SK-N-SH (cell line): ENCODE measurements at regions of chr10 and their contacts with region 1.

Region 1: GRCh38 chr10:97869091-97870042 is 19.7 kb downstream of the GOLGA7B start:
- DNase-seq: peak; percentile 93
- H3K4me3 ChIP-seq: no peak overlapping the region
- H3K27ac ChIP-seq: peak overlapping the region in 1 of 2 experiments; percentile 80; a peak in 2 of 4 replicates
- H3K4me1 ChIP-seq: peaks cover 0 to 15% of the 10 kb centered on the region in 2 experiments; a peak in 2 of 4 replicates
- H3K27me3 ChIP-seq: peaks cover 18% of the 10 kb centered on the region; the same call in 1 of the 2 replicates
- CTCF ChIP-seq: peak; percentile 72
- EP300 ChIP-seq: no peak
- RAD21 ChIP-seq: peak; percentile 98

Region 2: DNA sequence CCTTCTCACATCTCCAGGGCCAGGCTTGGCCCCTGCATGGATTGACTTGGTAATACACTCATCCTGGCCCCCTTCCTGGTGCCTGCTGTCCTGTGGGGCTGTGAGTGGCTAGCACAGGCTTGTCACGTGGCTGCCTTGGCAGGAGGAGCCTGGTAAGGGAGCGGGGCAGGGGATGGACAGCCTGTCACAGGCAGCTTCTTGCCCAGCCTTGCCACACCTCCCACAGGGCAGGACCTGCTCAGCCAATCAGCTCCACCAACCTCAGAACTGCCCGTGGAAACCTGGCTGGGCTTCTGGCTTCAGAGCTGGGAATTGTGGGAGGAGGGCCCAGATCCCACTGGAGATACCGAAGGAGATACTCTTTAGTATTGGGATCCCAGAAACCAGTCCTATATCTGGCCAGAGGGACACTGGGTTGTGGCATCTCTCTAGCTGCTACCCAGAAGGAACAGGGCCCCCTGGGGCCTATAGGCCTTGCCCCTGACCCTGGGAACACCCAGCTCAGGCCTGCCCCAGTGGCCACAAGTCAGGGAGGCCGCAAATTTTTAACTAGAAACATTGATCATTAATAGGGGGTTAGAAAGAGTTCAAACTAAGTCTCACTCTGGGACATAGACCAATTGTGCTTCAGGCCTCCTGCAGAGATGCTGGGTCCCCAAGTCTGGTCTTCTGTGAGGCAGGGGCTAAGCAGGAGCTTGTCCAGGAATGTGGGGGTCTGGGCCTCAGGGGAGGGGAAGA is 285.1 kb before region 1 on chr10 and contains the start of gene HOGA1:
- CTCF ChIA-PET with region 1: no interaction called
- POLR2A ChIA-PET with region 1: no interaction called
- DNase-seq: peak; percentile 89
- H3K4me3 ChIP-seq: no peak within 1 kb of the TSS; a peak in 1 of 4 replicates
- H3K27ac ChIP-seq: peak within 1 kb of the TSS; percentile 16 to 72; a peak in 3 of 4 replicates
- H3K4me1 ChIP-seq: peaks cover 0 to 21% of the 10 kb centered on the region in 2 experiments; a peak in 1 of 4 replicates
- H3K27me3 ChIP-seq: no peaks in the 10 kb centered on the region
- CTCF ChIP-seq: no peak
- EP300 ChIP-seq: no peak
- RAD21 ChIP-seq: no peak
- polyA plus RNA-seq, gene HOGA1: 2.9 and 4.8 TPM in 2 replicates

Region 3: GRCh38 chr10:97743169-97743943 is 126.0 kb before region 1 on chr10:
- CTCF ChIA-PET with region 1: interaction called, 13 read pairs
- POLR2A ChIA-PET with region 1: no interaction called
- DNase-seq: no peak
- H3K4me3 ChIP-seq: no peak overlapping the region
- H3K27ac ChIP-seq: peak overlapping the region in 1 of 2 experiments; percentile 71; a peak in 2 of 4 replicates
- H3K4me1 ChIP-seq: peaks cover 0 to 34% of the 10 kb centered on the region in 2 experiments; a peak in 2 of 4 replicates
- H3K27me3 ChIP-seq: no peaks in the 10 kb centered on the region
- CTCF ChIP-seq: no peak
- EP300 ChIP-seq: no peak
- RAD21 ChIP-seq: no peak

Region 4: GRCh38 chr10:97759158-97759887 is 110.0 kb before region 1 on chr10:
- CTCF ChIA-PET with region 1: interaction called, 162 read pairs
- POLR2A ChIA-PET with region 1: interaction called, 5 read pairs
- DNase-seq: peak; percentile 94
- H3K4me3 ChIP-seq: no peak overlapping the region; a peak in 1 of 4 replicates
- H3K27ac ChIP-seq: peak overlapping the region in 1 of 2 experiments; percentile 2; a peak in 1 of 4 replicates
- H3K4me1 ChIP-seq: peaks cover 0 to 6% of the 10 kb centered on the region in 2 experiments; a peak in 1 of 4 replicates
- H3K27me3 ChIP-seq: no peaks in the 10 kb centered on the region
- CTCF ChIP-seq: peak; percentile 86
- EP300 ChIP-seq: 0 out of 4 replicates have a peak, but pooled peaks of 1 of the 2 experiments have one; percentile 11
- RAD21 ChIP-seq: peak; percentile 93

Region 5: GRCh38 chr10:97827778-97828291 is 41.5 kb before region 1 on chr10:
- CTCF ChIA-PET with region 1: interaction called, 11 read pairs
- POLR2A ChIA-PET with region 1: interaction called, 3 read pairs
- DNase-seq: peak; percentile 67
- H3K4me3 ChIP-seq: no peak overlapping the region
- H3K27ac ChIP-seq: no peak overlapping the region
- H3K4me1 ChIP-seq: peaks cover 11 to 14% of the 10 kb centered on the region in 2 experiments; a peak in 2 of 4 replicates
- H3K27me3 ChIP-seq: no peaks in the 10 kb centered on the region; the same call in 1 of the 2 replicates
- CTCF ChIP-seq: no peak
- EP300 ChIP-seq: no peak
- RAD21 ChIP-seq: no peak

Region 6: DNA sequence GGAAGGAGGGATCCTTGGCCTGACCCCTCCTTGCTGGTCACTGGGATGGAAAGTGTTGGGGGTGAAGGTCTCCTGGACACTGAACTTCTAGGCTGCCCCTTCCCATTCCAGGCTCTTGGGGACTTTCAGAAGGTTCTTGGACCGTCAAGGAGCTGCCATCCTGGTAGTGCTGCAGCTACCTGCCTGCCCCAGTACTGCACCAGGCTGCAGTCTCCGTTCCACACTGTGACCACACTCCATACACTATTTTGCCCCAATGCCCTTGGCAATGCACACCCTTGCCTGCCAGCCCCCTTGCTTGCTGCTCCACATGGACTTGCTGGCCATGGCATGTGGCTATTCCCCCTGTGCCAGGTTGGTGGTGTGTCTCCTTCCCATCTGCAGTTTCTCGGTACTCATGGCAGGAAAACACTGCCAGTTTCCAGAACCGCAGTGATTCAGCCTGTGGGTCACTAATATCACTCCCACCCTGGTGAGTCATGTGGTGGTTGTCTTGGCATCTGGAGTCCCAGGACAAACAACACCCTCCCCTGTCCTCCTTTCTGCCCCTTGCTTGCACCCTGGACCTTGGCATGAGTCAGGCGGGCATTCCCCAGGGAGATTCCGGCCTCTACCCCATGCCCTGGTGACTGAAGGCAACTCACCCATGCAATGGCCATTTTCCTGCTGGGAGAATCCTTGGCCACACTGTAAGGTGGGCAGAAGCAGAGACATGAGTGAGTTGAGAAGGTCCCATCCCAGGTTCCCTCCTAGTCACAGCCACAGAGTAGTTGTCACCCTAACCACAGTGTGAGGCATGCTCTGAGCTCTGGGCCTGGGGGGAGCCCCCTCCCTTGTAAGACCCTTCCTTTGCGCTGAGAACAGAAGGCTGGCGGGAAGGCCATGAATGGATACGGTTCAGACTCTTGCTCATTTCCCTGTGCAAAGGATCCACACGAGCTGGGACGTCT is 13.1 kb after region 1 on chr10:
- CTCF ChIA-PET with region 1: interaction called, 27 read pairs
- POLR2A ChIA-PET with region 1: no interaction called
- DNase-seq: no peak
- H3K4me3 ChIP-seq: no peak overlapping the region
- H3K27ac ChIP-seq: peak overlapping the region in 1 of 2 experiments; percentile 16; a peak in 2 of 4 replicates
- H3K4me1 ChIP-seq: peaks cover 0 to 11% of the 10 kb centered on the region in 2 experiments; a peak in 2 of 4 replicates
- H3K27me3 ChIP-seq: no peaks in the 10 kb centered on the region
- CTCF ChIP-seq: no peak
- EP300 ChIP-seq: peak in 1 of 2 experiments; percentile 86; a peak in 2 of 4 replicates
- RAD21 ChIP-seq: no peak

Region 7: DNA sequence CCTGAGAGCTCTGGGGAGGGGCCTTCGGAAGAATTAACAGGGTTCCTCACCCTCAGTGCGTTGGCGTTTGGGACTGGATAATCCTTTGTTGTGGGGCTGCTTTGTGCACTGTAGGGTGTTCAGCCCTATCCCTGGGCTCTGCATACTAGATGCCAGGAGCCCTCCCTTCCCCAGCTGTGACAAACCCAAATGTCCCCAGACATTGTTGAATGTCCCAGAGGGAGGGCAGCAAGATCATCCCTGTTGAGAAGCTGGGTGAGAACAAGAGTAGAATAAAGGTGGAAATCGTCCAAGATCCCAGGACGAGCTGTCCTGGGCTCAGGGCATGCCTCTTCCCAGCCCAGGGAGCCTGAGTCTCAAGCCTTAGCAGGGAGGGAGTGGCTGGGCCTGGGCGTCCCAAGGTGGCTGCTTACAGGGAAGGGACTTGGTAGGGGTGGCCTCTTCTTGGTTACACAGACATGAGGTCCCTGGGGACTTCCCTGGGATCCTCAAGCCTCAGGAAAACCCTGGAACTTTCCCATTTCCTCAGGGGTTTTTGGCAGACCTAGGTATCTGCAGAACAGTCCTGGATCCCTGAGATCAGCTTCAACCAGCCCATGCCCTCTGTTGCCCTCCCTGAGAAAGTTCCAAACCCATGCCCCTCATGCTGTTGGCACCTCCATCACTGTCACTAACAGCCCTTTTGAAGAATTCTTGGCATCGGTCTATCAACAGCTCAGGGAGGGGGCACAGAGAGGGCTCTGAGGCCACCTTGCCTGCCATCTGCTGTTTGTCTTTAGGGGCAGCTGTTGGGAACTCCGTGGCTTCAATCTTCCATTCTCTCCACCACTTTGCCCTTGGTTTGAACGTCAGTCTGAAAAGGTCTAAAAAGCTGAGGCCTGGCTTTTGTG is 34.0 kb after region 1 on chr10:
- CTCF ChIA-PET with region 1: interaction called, 32 read pairs
- POLR2A ChIA-PET with region 1: no interaction called
- DNase-seq: no peak
- H3K4me3 ChIP-seq: no peak overlapping the region
- H3K27ac ChIP-seq: no peak overlapping the region
- H3K4me1 ChIP-seq: peaks cover 0 to 12% of the 10 kb centered on the region in 2 experiments; a peak in 1 of 4 replicates
- H3K27me3 ChIP-seq: peaks cover 9% of the 10 kb centered on the region; the same call in 1 of the 2 replicates
- CTCF ChIP-seq: no peak
- EP300 ChIP-seq: no peak
- RAD21 ChIP-seq: no peak; the same call in 1 of the 2 replicates

Region 8: DNA sequence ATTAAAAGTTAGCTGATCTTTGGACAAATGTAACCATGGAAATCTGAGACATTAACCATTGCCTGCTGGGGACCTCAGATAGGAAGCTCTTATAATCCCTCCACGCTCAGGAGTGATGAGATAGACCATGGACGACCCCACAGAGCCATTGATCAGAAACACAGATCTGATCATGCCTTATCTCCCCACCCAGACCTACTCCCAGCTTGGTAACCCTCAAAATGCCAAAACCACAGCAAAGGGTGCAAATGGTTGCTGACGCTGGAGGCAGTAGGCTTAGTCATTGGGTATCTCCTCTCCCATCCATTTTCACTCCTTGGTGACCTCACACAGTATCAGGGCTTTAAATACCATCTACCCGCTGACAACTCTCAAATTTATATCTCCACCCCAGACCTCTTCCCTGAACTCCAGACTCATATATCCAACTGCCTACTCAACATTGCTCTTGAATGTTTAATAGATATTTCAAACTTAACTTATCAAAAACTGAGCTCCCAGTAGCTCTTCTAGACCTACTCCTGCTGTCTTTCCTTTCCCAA is 100.2 kb after region 1 on chr10:
- CTCF ChIA-PET with region 1: no interaction called
- POLR2A ChIA-PET with region 1: no interaction called
- DNase-seq: no peak
- H3K4me3 ChIP-seq: no peak overlapping the region
- H3K27ac ChIP-seq: no peak overlapping the region
- H3K4me1 ChIP-seq: no peaks in the 10 kb centered on the region; a peak in 1 of 4 replicates
- H3K27me3 ChIP-seq: no peaks in the 10 kb centered on the region; the same call in 1 of the 2 replicates
- CTCF ChIP-seq: no peak
- EP300 ChIP-seq: no peak
- RAD21 ChIP-seq: no peak